Activated CD4-positive, alpha-beta T cell treated with anti-CD3 and anti-CD28 coated beads, Interleukin-2, amount 10 ng/mL, durations not matched to agents 24 days and 14 days (primary cell): ENCODE measurements at regions of chr3 and their contacts with region 1.

Region 1: DNA sequence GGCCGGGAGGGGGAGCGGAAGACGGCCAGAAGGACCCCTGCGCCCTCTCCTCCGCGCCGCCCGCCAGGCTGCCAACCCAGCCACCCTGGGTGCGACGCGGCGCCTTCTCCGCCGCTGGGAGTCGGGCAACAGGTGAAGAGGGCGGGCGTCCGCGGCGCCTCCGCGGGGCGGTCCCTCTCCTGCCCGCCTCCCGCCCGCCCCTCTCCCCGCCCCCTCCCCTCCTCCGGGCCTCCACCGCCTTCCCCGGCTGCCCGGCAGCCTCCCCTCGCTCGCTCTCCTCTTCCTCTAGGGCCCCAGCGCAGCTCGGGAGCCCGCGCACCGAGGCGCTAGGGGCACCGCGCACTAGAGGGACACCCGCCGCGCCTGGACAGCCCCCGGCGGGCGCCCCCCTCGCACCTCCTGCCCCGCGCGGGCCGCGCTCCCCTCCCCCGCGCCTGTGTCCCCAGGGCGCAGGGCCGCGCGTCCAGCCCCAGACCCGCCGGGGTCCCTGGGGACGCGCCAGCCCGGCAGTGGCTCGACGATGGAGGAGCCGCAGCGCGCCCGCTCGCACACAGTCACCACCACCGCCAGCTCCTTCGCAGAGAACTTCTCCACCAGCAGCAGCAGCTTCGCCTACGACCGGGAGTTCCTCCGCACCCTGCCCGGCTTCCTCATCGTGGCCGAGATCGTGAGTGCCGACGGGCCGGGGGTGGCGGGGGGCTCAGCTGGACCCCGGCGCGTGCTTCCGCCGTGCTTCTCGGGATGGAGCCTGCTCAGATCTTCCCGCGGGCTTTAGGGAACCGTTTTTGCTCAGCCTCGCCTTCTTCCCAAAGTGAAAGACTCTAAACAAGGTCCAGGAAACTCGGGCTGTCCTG is at the start of gene CMTM8:
- DNase-seq: peak; percentile 90
- H3K4me3 Mint-ChIP-seq: peak within 1 kb of the TSS; percentile 86
- H3K27ac Mint-ChIP-seq: peak within 1 kb of the TSS; percentile 75
- H3K4me1 Mint-ChIP-seq: peaks cover 19% of the 10 kb centered on the region
- H3K27me3 Mint-ChIP-seq: peaks cover 32% of the 10 kb centered on the region
- total RNA-seq, gene CMTM8: 4.8 and 5.5 TPM in 2 replicates

Region 2: GRCh38 chr3:32106280-32106928 is 132.3 kb before region 1 on chr3 and contains the start of gene GPD1L:
- intact Hi-C with region 1: loop called (anchors 10 kb)
- DNase-seq: peak; percentile 98
- H3K4me3 Mint-ChIP-seq: peak within 1 kb of the TSS; percentile 94
- H3K27ac Mint-ChIP-seq: peak within 1 kb of the TSS; percentile 90
- H3K4me1 Mint-ChIP-seq: peaks cover 32% of the 10 kb centered on the region
- H3K27me3 Mint-ChIP-seq: no peaks in the 10 kb centered on the region
- total RNA-seq, gene GPD1L: 19.0 and 20.0 TPM in 2 replicates